HEK293T (cell line): ENCODE measurements at regions of chr7 and their contacts with region 1.

Region 1: DNA sequence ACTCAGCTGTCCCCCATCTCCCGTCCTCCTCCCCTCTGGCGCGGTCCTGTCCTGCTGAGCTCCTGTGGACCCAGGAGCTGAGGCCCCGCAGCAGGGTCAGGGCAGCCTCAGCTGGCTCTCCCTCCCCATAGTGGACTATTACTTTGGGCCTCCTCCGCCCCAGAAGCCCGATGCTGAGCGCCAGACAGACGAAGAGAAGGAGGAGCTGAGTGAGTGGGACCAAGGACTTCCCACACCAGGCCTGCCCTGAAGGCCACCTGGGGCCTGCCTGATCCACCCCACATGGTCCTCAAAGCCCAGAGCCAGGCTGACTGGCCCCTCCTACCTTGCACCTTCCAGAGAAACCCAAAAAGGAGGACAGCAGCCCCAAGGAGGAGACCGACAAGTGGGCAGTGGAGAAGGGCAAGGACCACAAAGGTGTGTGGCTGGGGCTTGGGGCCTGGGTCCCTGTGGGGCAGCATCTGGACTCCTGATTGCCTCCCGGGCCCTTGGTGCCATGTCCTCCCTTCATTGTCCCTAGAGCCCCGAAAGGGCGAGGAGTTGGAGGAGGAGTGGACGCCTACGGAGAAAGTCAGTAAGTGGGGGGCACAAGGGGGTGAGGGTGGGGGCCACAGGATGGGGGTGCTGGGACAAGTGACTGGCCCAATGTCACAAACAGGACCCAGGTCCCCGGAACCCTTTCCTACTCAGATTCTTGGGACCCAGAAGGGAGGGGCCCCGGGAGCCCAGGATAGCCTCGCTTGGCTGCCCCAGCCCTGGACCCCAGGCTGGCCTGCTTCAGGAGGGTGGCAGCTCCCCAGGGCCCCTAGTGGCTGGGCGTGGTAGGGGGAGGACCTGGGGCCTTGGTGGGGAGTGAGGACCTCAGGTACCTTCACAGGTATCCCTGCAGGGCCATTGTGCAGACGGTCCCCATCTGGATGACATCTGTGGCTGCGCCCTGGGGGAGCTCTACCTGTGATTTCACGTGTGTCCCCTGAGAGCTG is 4.9 kb downstream of the AEBP1 start:
- DNase-seq: no peak

Region 2: GRCh38 chr7:44065436-44066118 is 43.5 kb before region 1 on chr7 and contains the start of gene PGAM2:
- CTCF ChIA-PET with region 1: no interaction called
- POLR2A ChIA-PET with region 1: no interaction called
- DNase-seq: no peak

Region 3: GRCh38 chr7:44123190-44124003 is 14.3 kb after region 1 on chr7 and contains the start of gene POLD2:
- CTCF ChIA-PET with region 1: no interaction called
- POLR2A ChIA-PET with region 1: interaction called, 24 read pairs
- DNase-seq: peak; percentile 99